Right ventricle myocardium inferior (tissue), 1 donor: ENCODE measurements at regions of chr19 and their contacts with region 1.

Region 1: DNA sequence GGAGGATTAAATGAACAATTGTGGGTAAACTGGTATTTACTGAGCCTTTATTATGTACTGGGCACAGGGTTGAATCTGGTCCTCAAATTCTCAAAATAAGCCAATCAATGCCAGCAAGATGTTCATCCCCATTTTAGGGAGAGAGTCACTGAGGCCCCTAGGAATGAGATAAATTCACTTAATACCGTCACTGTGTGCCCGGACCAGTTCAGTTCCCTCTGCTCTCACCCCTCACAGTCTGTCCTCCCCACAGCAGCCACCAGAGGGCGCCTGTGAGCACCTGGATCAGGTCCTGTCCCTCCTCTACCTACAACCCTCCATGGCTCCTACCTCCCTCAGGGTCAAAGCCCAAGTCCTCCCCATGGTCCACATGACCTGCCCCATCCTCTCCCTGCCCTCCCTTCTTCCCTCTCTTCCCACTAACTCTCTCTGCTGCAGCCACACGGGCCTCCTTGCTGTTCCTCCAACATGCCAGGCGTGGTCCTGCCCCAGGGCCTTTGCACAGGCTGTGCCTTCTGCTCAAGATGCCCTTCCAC is 42.0 kb upstream of the NFIC start:
- DNase-seq: peak; percentile 83
- ATAC-seq: no peak

Region 2: DNA sequence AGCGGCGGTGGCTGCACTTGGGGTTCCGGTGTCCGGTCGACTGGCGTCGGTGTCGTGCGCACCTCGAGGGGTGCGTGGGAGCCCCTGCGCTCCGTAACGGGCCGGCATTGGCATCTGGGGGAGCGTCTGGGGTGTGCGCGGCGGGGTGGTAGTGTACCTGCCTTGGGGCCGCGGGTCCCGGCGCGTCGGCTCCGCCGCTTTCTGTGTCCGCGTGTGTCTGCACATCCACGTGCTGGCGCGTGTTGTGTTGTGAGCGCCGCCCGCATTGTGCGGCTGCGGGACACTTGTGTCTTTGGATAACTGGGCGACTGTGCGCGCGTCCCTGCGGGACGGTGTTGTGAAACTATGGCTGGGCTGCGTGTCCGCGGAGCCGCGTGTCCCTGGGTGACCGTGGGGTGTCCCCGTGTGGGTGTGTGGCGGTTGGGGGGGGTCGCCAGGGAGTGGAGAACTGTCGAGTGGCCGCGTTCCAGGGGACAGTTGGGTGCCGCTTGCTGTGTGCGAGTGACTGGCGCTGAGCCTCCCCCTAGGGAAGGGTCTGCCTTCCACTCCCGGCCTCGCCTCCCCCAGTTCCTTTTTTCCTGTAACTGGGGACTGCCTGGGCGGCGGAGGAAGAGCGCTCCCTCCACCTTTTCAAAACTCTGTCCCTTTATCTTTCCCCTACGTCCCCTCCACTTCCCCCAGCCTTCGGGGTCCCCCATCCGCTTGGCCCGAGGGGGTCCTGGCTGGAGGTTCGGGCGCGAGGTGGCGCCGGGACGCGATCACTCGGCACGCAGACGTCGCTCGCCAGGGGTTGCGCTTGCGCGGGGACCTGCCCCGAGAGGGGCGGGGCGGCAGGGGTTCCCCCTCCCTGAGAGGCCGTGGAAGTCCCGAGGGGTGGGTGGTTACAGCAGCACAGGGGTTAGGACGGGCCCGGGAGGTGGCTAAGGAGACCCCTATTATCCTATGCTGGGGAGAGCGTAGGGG is 36.3 kb after region 1 on chr19:
- intact Hi-C with region 1: loop called (anchors 5 kb)
- DNase-seq: peak; percentile 90
- ATAC-seq: peak; percentile 70

Region 3: GRCh38 chr19:3434712-3435553 is 110.5 kb after region 1 on chr19:
- intact Hi-C with region 1: loop called (anchors 5 kb)
- DNase-seq: peak; percentile 98
- ATAC-seq: peak; percentile 94

Region 4: DNA sequence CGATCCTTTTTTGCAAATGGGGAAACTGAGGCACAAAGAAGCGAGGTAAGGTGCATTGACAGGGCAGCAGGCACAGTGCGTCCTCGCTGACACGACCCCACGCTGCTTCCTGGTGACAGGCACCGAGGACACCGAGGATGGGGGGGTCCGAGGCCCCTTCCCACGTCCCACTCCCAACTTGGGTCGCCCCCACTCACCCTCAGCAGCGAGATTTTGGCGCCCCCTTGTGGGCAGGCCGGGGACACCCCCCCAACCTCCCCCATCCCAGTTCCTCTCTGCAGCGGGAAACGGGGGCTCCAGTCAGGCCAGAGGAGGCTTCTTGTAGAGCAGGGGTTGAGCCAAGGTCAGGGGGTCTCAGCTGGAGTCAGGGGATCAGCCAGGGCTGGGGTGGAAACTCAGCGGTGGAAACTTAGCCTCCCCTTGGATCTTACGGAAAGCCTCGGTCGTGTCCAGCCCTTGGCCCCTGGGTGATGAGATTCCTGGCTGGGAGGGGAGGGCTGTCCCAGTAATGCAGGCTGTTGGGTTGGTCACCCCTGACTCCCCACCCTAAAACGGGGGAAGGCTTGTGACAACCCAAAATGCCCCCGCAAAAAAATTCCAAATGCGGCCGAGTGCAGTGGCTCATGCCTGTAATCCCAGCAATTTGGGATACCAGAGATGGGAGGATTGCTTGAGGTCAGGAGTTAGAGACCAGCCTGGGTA is 147.7 kb after region 1 on chr19:
- intact Hi-C with region 1: loop called (anchors 1 kb)
- DNase-seq: no peak
- ATAC-seq: peak; percentile 62